B cell (primary cell): ENCODE measurements at regions of chr4 and their contacts with region 1.

Region 1: DNA sequence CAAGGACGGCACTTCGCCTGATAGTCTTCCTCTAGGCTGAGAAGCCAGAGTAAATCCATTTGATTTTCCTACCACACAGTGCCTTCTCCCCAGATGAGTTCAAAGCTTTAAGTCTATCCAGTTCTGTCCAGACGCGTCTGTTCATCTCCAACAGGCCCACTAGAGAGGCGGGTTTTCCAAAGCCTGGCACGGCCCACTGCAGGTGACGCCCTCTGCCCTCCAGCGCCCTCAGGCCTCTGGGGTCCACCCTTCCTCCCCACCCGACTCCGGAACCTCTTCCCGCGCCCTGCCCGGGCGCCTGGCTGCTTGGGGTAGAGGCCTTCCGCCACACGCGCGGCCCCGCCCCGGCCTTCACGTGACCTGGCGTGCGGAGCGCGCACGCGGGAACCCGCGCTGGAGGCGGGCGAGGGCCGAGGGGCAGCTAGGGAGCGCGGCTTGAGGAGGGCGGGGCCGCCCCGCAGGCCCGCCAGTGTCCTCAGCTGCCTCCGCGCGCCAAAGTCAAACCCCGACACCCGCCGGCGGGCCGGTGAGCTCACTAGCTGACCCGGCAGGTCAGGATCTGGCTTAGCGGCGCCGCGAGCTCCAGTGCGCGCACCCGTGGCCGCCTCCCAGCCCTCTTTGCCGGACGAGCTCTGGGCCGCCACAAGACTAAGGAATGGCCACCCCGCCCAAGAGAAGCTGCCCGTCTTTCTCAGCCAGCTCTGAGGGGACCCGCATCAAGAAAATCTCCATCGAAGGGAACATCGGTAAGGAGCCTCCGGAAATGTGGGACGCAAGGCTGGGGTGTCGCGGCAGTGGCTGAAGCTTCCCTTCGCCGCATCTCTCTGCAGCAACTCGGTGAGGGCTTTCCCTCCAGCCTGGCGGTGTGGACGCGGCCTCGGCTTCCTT is at the start of gene DCK:
- DNase-seq: peak; percentile 92
- ATAC-seq: peak; percentile 82
- H3K4me3 ChIP-seq: peak within 1 kb of the TSS; percentile 85 to 99 (median 97)
- H3K4me3 Mint-ChIP-seq: peak within 1 kb of the TSS; percentile 97
- H3K27ac ChIP-seq: peak within 1 kb of the TSS; percentile 86 to 94
- H3K27ac Mint-ChIP-seq: peak within 1 kb of the TSS; percentile 96
- H3K4me1 ChIP-seq: peaks cover 39 to 40% of the 10 kb centered on the region in 2 donors
- H3K4me1 Mint-ChIP-seq: peaks cover 52% of the 10 kb centered on the region
- H3K27me3 ChIP-seq: no peaks in the 10 kb centered on the region
- H3K27me3 Mint-ChIP-seq: no peaks in the 10 kb centered on the region
- CTCF ChIP-seq: no peak
- total RNA-seq, gene DCK: 58.2 and 64.7 TPM in 2 replicates

Region 2: DNA sequence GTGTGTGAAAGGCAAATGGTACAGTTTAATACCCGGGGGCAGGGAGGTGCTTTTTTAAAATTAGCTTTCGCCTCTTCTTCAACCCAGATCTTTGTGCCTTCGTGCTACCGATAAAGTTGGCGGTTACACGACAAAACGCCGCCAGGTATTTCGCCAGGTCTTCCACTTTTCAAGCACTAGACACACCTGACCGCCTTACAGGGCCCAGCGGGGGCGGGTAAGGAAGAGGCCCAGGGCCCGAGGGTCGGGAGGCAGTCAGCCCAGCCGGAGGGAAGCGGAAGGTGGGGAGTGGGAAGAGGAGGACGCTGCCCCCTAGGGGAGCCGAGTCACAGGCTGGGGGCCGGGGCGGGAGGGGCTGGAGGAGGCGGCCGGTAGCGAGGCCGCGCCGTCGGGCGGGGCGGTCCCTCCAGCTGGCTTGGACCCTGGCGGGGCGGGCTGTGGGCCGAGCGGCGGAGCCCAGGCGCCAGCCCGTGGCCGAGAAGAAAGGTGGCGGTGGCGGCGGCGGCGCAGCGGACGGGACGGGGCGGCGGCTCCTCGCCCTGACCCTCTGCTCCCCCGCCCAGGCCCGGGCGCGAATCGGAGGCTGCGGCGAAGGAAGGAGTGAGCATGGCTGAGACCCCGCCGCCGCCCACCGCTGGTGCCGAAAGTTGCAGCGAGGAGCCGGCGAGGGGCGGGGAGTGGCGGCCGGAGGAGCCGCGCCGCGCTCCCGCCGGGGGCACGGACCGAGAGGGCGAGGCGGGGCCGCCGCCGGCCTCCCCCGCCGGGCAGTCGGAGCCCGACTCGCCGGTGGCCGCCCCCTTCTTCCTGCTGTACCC is 288.9 kb before region 1 on chr4:
- CTCF ChIA-PET with region 1: interaction called, 3 read pairs
- POLR2A ChIA-PET with region 1: interaction called, 3 read pairs
- intact Hi-C with region 1: loop called (anchors 1 kb)
- DNase-seq: peak; percentile 85
- ATAC-seq: peak; percentile 70
- H3K4me3 ChIP-seq: peak overlapping the region; percentile 2 to 88 (median 82)
- H3K4me3 Mint-ChIP-seq: peak overlapping the region; percentile 91
- H3K27ac ChIP-seq: peak overlapping the region; percentile 62 to 80
- H3K27ac Mint-ChIP-seq: peak overlapping the region; percentile 98
- H3K4me1 ChIP-seq: peaks cover 17 to 25% of the 10 kb centered on the region in 2 donors
- H3K4me1 Mint-ChIP-seq: peaks cover 25% of the 10 kb centered on the region
- H3K27me3 ChIP-seq: no peaks in the 10 kb centered on the region
- H3K27me3 Mint-ChIP-seq: no peaks in the 10 kb centered on the region
- CTCF ChIP-seq: peak; percentile 12

Region 3: DNA sequence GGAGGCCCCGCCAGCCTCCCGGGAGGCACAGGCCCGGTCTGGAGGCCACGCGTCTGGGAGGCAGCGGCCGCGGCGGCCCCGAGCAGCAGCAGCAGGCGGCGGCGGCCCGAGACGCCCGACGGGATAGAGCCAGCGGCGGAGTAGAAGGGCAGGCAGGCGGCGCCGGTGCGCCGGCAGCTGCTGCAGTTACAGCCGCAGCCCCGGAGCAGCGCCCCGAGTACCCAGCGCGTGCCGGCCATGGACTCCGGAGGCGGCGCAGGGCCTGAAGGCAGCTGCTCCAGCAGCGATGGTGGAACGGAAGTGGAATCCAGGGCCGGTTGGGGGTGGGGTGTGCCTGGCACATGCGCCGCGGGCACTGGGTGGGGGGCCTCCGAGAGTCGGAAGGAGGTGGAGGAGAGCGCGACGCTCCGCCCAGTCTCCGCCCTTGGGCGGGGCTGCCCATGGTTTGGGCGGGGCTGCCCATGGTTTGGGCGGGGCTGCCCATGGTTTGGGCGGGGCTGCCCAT is 153.8 kb before region 1 on chr4 and contains the start of gene GRSF1:
- CTCF ChIA-PET with region 1: interaction called, 7 read pairs
- POLR2A ChIA-PET with region 1: interaction called, 7 read pairs
- intact Hi-C with region 1: loop called (anchors 1 kb)
- DNase-seq: peak; percentile 95
- ATAC-seq: peak; percentile 86
- H3K4me3 ChIP-seq: peak within 1 kb of the TSS; percentile 27 to 79 (median 73)
- H3K4me3 Mint-ChIP-seq: peak within 1 kb of the TSS; percentile 99
- H3K27ac ChIP-seq: peak within 1 kb of the TSS; percentile 62 to 85
- H3K27ac Mint-ChIP-seq: peak within 1 kb of the TSS; percentile 95
- H3K4me1 ChIP-seq: peaks cover 22 to 46% of the 10 kb centered on the region in 2 donors
- H3K4me1 Mint-ChIP-seq: peaks cover 45% of the 10 kb centered on the region
- H3K27me3 ChIP-seq: no peaks in the 10 kb centered on the region
- H3K27me3 Mint-ChIP-seq: no peaks in the 10 kb centered on the region
- CTCF ChIP-seq: no peak
- total RNA-seq, gene GRSF1: 43.2 and 44.2 TPM in 2 replicates

Region 4: DNA sequence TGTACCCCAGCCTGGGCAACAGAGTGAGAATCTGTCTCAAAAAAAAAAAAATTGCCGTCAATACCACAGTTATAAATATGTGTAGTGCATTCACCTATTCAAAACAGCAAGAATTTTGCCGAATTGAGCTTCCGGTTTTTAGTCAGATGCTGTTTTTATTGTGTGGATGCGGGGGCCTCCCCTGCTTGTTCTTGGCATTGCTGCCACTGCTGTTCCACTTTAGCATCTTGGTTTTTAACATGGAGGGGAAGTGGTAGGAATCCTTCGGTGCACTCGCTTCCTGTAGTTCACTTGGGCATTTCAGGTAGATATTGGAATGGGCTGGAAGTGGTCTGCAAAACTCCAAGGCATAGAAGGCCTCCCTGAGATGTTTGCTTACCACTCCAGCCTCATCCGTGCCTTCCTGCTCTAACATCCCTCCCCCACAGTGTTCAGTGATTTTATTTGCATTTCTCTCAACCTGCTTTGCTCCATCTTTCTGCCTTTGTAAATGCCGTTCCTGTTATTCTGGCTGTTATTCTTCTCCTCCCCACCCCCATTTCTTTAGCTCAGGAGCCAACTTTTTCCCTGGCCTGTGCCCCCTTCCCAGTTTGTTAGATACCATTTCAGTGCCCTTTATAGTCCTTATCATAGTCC is 65.8 kb before region 1 on chr4:
- CTCF ChIA-PET with region 1: no interaction called
- POLR2A ChIA-PET with region 1: no interaction called
- intact Hi-C with region 1: loop called (anchors 5 kb)
- DNase-seq: peak; percentile 72
- ATAC-seq: peak; percentile 61
- H3K4me3 ChIP-seq: peak overlapping the region in 1 of 5 experiments; percentile 13
- H3K4me3 Mint-ChIP-seq: peak overlapping the region; percentile 61
- H3K27ac ChIP-seq: peak overlapping the region; percentile 55 to 67
- H3K27ac Mint-ChIP-seq: peak overlapping the region; percentile 72
- H3K4me1 ChIP-seq: peaks cover 40 to 47% of the 10 kb centered on the region in 2 donors
- H3K4me1 Mint-ChIP-seq: peaks cover 52% of the 10 kb centered on the region
- H3K27me3 ChIP-seq: no peaks in the 10 kb centered on the region
- H3K27me3 Mint-ChIP-seq: no peaks in the 10 kb centered on the region
- CTCF ChIP-seq: peak; percentile 19

Region 5: GRCh38 chr4:71004281-71004851 is 10.9 kb after region 1 on chr4:
- CTCF ChIA-PET with region 1: interaction called, 245 read pairs
- POLR2A ChIA-PET with region 1: interaction called, 43 read pairs
- intact Hi-C with region 1: loop called (anchors 1 kb)
- DNase-seq: peak; percentile 82
- ATAC-seq: peak; percentile 65
- H3K4me3 ChIP-seq: peak overlapping the region in 4 of 5 experiments; percentile 9 to 58 (median 30)
- H3K4me3 Mint-ChIP-seq: peak overlapping the region; percentile 87
- H3K27ac ChIP-seq: peak overlapping the region; percentile 70 to 93
- H3K27ac Mint-ChIP-seq: peak overlapping the region; percentile 96
- H3K4me1 ChIP-seq: peaks cover 67 to 68% of the 10 kb centered on the region in 2 donors
- H3K4me1 Mint-ChIP-seq: peaks cover 83% of the 10 kb centered on the region
- H3K27me3 ChIP-seq: no peaks in the 10 kb centered on the region
- H3K27me3 Mint-ChIP-seq: no peaks in the 10 kb centered on the region
- CTCF ChIP-seq: no peak

Region 6: DNA sequence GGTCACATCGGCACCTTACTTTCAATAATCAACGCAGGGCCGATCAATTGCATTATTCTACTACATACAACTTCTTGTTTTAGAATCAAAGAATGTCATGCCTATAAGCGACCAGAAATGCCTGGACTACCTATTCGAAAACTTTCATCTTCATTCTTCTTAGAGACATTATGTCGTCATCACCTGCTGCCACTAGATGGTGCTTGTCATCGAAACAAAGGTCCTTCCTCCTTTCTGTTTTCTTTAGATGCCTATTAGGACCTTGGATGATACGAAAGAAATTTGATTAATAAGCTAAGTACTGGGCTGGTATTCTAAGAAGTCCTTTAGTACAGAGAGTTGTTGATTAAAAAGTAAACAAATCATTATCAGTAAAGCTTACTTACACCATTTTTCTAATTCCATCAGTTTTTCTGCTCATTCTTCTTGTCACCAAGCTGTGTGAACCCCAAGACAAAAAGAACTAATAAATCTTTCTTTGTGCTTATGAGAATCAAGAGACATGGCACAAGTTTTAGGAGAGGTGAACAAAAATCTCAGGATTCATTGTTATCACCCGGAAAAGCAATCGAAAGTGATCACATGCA is 190.9 kb after region 1 on chr4:
- CTCF ChIA-PET with region 1: interaction called, 3 read pairs
- POLR2A ChIA-PET with region 1: no interaction called
- intact Hi-C with region 1: loop called (anchors 5 kb)
- DNase-seq: peak; percentile 73
- ATAC-seq: peak; percentile 69
- H3K4me3 ChIP-seq: no peak overlapping the region
- H3K4me3 Mint-ChIP-seq: no peak overlapping the region
- H3K27ac ChIP-seq: no peak overlapping the region
- H3K27ac Mint-ChIP-seq: no peak overlapping the region
- H3K4me1 ChIP-seq: peaks cover 15 to 19% of the 10 kb centered on the region in 2 donors
- H3K4me1 Mint-ChIP-seq: peaks cover 23% of the 10 kb centered on the region
- H3K27me3 ChIP-seq: peaks cover 0 to 32% (median 26%) of the 10 kb centered on the region in 4 experiments
- H3K27me3 Mint-ChIP-seq: peaks cover 33% of the 10 kb centered on the region
- CTCF ChIP-seq: peak; percentile 86